A673 (cell line): ENCODE measurements at regions of chr1 and their contacts with region 1.

Region 1: GRCh38 chr1:163535807-163536206 is 214.1 kb downstream of the NUF2 start:
- DNase-seq: peak; percentile 80
- H3K4me3 ChIP-seq: no peak overlapping the region
- H3K27ac ChIP-seq: peak overlapping the region; percentile 65
- H3K4me1 ChIP-seq: peaks cover 44% of the 10 kb centered on the region
- H3K27me3 ChIP-seq: no peaks in the 10 kb centered on the region
- CTCF ChIP-seq: peak; percentile 83

Region 2: GRCh38 chr1:163589735-163590134 is 53.9 kb after region 1 on chr1:
- CTCF ChIA-PET with region 1: interaction called, 9 read pairs
- POLR2A ChIA-PET with region 1: no interaction called
- intact Hi-C with region 1: loop called (anchors 1 kb)
- DNase-seq: peak; percentile 98
- H3K4me3 ChIP-seq: no peak overlapping the region
- H3K27ac ChIP-seq: peak overlapping the region; percentile 98
- H3K4me1 ChIP-seq: peaks cover 59% of the 10 kb centered on the region
- H3K27me3 ChIP-seq: no peaks in the 10 kb centered on the region
- CTCF ChIP-seq: no peak

Region 3: DNA sequence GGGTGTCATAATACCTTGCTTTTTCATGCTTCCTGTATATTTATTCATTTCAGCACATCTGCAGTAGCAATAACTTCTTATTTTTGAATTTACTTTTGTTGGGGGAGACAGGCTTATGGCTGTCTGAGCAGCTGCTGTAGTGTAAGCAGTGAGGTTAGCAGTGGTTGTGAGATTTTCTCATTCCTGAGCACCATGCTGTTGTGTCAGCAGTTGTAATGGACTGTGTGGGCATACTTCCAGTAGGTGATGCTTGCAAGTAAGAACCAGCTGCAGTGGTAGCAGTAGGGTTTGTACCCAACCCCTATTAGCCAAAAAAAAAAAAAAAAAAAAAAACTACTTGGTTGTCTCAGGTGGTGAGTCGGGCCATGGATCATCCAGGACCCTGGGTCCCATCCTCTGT is 97.6 kb after region 1 on chr1:
- CTCF ChIA-PET with region 1: no interaction called
- POLR2A ChIA-PET with region 1: no interaction called
- intact Hi-C with region 1: no loop called
- DNase-seq: no peak
- H3K4me3 ChIP-seq: no peak overlapping the region
- H3K27ac ChIP-seq: no peak overlapping the region
- H3K4me1 ChIP-seq: no peaks in the 10 kb centered on the region
- H3K27me3 ChIP-seq: no peaks in the 10 kb centered on the region
- CTCF ChIP-seq: no peak

Region 4: DNA sequence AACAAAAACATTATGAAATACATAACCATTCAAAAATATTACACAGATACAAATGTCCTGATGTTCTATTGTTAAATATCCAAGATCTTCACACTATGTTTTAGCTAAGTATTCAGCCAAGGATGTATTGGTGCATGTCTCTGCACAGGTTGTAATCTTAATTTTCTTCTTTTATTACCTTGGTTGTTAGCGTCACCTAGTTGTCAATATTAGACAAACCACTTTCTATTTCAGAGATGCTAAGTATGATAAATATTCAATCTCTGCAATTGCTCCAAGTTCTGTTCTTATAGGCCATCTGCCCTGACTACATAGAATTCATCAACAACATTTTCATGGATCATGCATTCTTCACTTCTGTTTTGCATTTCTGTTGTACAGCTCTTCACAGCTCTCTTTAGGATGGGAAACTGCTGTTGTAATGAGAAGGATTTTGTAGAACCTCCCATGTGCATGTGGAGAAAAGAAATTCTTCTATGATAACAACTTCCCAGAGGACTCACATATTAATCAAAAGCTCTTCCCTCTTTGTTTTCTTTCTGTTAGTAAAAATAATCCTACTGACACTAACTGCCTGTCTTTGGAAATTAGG is 166.1 kb after region 1 on chr1:
- CTCF ChIA-PET with region 1: interaction called, 4 read pairs
- POLR2A ChIA-PET with region 1: no interaction called
- intact Hi-C with region 1: loop called (anchors 10 kb)
- DNase-seq: no peak
- H3K4me3 ChIP-seq: no peak overlapping the region
- H3K27ac ChIP-seq: peak overlapping the region; percentile 6
- H3K4me1 ChIP-seq: peaks cover 36% of the 10 kb centered on the region
- H3K27me3 ChIP-seq: no peaks in the 10 kb centered on the region
- CTCF ChIP-seq: 0 out of 2 replicates have a peak, but pooled peaks have one; percentile 22

Region 5: DNA sequence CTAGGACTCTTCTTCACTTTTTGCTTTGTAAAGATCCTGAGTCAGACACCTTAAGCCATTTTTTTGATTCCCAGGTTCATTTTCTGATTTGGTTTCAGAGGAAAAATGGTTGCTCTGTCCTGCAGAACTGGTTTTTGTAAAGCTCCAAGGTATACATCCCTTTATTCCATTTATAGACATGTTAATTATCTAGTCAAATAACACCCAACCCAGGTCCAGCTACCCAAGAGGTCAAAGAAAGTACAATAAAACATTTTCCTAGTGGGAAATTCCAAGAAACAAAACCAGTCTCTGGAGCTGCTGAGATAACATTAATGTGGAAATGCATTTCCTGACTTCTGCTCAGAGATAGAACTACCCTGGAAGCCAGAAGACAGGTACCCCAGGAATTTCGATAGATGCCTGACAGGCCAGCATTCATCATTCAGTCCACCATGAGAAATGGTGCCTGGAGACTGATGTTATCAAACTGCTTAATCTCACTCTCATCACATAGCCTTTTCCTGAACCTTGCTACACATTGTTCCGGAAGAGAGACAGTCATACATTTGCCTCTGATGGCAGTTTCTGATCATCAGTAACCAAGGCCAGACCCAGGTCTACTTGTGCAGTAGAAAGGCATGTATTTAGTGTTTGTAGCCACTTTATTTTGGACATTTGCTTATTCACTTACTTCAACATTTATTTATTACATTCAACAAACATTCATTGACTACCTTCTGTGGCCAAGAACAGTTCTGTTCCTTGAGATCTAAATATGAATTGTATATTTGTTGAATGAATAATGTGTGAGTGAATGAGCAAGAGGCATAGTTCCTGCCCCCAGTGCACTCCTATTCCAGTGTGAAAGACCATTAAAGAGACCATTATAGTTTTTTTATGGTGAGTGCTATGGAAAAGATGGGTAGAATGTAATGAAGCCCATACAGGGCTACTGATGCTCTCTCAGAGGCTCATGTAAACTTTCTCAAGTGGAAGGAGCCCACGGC is 271.5 kb after region 1 on chr1:
- CTCF ChIA-PET with region 1: no interaction called
- POLR2A ChIA-PET with region 1: no interaction called
- intact Hi-C with region 1: loop called (anchors 10 kb)
- DNase-seq: no peak
- H3K4me3 ChIP-seq: no peak overlapping the region
- H3K27ac ChIP-seq: no peak overlapping the region
- H3K4me1 ChIP-seq: no peaks in the 10 kb centered on the region
- H3K27me3 ChIP-seq: no peaks in the 10 kb centered on the region
- CTCF ChIP-seq: no peak

Region 6: DNA sequence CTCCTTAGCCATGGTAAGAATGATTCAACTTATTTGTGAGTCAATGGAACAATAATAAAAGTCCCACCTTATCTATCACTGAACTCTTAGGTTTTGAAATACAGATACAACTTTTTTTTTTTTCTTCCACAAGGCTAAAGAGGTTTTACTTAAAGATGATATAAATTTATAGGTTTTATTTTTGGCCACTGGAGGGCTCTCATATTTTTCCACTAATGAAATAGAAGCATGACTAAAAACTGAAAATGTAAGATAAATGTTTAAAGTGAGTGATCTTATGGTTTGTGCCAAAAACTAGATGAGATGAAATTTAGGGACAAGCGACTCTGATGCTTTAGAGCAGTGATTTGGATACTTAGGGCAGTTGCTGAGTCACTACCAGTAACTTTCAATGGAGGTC is 285.0 kb after region 1 on chr1:
- CTCF ChIA-PET with region 1: no interaction called
- POLR2A ChIA-PET with region 1: no interaction called
- intact Hi-C with region 1: loop called (anchors 5 kb)
- DNase-seq: peak; percentile 35
- H3K4me3 ChIP-seq: no peak overlapping the region
- H3K27ac ChIP-seq: no peak overlapping the region
- H3K4me1 ChIP-seq: peaks cover 12% of the 10 kb centered on the region
- H3K27me3 ChIP-seq: no peaks in the 10 kb centered on the region
- CTCF ChIP-seq: peak; percentile 57

Region 7: GRCh38 chr1:165073185-165074007 is 1537.6 kb after region 1 on chr1:
- CTCF ChIA-PET with region 1: interaction called, 6 read pairs
- POLR2A ChIA-PET with region 1: interaction called, 3 read pairs
- intact Hi-C with region 1: loop called (anchors 5 kb)
- DNase-seq: peak; percentile 75
- H3K4me3 ChIP-seq: no peak overlapping the region
- H3K27ac ChIP-seq: no peak overlapping the region
- H3K4me1 ChIP-seq: no peaks in the 10 kb centered on the region
- H3K27me3 ChIP-seq: no peaks in the 10 kb centered on the region
- CTCF ChIP-seq: peak; percentile 74